Activated T-helper 1 cell treated with anti-CD3 and anti-CD28 coated beads, Interleukin-12 subunit alpha, Interleukin-12 subunit beta, Interleukin-2, Interleukin-4 antibody, amounts not matched to agents 30 ng/mL and 10 ng/mL and 1 ng/mL, durations not matched to agents 14 hours and 24 hours and 36 hours (primary cell): ENCODE measurements at regions of chr15 and their contacts with region 1.

Region 1: GRCh38 chr15:90869601-90870353 is 1.4 kb downstream of the FURIN start:
- DNase-seq: peak; percentile 61
- H3K4me3 Mint-ChIP-seq: peak overlapping the region; percentile 94
- H3K27ac Mint-ChIP-seq: peak overlapping the region; percentile 95
- H3K4me1 Mint-ChIP-seq: peaks cover 62% of the 10 kb centered on the region
- H3K27me3 Mint-ChIP-seq: no peaks in the 10 kb centered on the region

Region 2: GRCh38 chr15:90598031-90598577 is 271.7 kb before region 1 on chr15:
- intact Hi-C with region 1: no loop called
- DNase-seq: no peak
- H3K4me3 Mint-ChIP-seq: peak overlapping the region; percentile 53
- H3K27ac Mint-ChIP-seq: peak overlapping the region; percentile 99
- H3K4me1 Mint-ChIP-seq: peaks cover 86% of the 10 kb centered on the region
- H3K27me3 Mint-ChIP-seq: no peaks in the 10 kb centered on the region

Region 3: GRCh38 chr15:90648137-90649070 is 221.4 kb before region 1 on chr15:
- intact Hi-C with region 1: loop called (anchors 1 kb)
- DNase-seq: peak; percentile 75
- H3K4me3 Mint-ChIP-seq: peak overlapping the region; percentile 35
- H3K27ac Mint-ChIP-seq: peak overlapping the region; percentile 97
- H3K4me1 Mint-ChIP-seq: peaks cover 49% of the 10 kb centered on the region
- H3K27me3 Mint-ChIP-seq: no peaks in the 10 kb centered on the region

Region 4: DNA sequence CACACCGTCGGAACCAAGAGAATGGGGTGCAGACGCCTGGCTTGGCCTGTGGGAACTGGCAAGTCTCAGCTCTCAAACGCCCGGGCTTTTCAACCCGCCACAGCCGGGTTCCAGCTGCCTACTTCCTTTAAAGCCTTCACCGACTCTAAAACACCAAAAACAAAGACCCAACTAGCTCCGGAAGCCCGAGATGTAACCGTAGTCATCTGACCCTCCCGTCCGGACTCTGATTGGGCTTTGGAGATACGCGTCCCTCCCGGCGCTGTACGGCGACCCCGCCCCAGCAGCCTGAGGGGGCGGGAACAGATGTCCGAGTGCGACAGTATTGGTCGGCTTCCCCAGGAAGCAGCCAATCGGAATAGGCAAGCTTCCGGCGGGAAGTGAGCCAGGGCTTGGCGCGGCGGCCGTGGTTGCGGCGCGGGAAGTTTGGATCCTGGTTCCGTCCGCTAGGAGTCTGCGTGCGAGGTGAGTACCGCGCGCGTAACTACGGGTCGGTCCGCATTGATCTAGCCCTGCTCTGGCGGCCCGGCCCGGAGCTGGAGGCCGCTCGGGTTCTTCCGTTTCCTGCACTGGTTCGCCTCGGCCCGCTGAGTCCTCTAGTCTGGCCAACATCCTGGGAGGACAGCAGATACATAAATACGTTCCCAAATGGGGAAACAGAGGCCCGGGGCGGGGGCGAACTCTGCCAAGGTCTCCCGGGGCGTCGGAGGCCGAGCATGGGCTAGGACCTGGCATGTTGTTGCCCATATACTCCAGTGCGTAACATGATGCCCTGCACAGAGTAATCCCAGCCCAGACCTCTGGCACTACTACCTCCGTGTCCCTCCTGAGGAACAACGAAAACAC is 152.6 kb before region 1 on chr15 and contains the start of gene BLM:
- intact Hi-C with region 1: loop called (anchors 1 kb)
- DNase-seq: peak; percentile 97
- H3K4me3 Mint-ChIP-seq: peak within 1 kb of the TSS; percentile 90
- H3K27ac Mint-ChIP-seq: peak within 1 kb of the TSS; percentile 96
- H3K4me1 Mint-ChIP-seq: peaks cover 38% of the 10 kb centered on the region
- H3K27me3 Mint-ChIP-seq: no peaks in the 10 kb centered on the region
- total RNA-seq, gene BLM: 64.3 and 65.1 TPM in 2 replicates

Region 5: DNA sequence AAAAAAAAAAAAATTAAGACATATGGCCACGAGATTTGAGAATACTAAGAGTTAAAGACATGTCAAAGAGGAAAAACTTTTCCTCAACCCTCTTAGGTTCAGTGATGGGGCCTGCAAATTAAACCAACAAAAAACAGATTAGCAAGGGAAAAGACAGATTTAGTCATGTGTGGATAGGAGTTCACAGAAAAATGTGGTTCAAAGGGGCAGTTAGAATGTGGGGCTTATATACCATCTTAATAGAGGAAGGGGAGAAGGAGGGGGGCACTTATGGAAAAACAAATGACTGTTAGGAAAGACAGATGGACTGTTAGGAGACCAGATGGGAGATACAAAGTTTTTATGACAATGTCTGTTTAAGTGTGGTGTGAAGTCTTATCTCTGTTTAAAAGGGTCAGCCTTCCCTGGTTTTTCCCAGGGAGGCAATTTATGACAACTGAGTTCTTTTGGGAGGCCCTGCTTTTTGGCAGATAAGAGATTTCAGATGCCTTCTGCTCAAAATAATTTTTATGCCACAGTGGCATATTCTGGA is 70.1 kb before region 1 on chr15:
- intact Hi-C with region 1: no loop called
- DNase-seq: no peak
- H3K4me3 Mint-ChIP-seq: no peak overlapping the region
- H3K27ac Mint-ChIP-seq: peak overlapping the region; percentile 47
- H3K4me1 Mint-ChIP-seq: peaks cover 48% of the 10 kb centered on the region
- H3K27me3 Mint-ChIP-seq: no peaks in the 10 kb centered on the region

Region 6: DNA sequence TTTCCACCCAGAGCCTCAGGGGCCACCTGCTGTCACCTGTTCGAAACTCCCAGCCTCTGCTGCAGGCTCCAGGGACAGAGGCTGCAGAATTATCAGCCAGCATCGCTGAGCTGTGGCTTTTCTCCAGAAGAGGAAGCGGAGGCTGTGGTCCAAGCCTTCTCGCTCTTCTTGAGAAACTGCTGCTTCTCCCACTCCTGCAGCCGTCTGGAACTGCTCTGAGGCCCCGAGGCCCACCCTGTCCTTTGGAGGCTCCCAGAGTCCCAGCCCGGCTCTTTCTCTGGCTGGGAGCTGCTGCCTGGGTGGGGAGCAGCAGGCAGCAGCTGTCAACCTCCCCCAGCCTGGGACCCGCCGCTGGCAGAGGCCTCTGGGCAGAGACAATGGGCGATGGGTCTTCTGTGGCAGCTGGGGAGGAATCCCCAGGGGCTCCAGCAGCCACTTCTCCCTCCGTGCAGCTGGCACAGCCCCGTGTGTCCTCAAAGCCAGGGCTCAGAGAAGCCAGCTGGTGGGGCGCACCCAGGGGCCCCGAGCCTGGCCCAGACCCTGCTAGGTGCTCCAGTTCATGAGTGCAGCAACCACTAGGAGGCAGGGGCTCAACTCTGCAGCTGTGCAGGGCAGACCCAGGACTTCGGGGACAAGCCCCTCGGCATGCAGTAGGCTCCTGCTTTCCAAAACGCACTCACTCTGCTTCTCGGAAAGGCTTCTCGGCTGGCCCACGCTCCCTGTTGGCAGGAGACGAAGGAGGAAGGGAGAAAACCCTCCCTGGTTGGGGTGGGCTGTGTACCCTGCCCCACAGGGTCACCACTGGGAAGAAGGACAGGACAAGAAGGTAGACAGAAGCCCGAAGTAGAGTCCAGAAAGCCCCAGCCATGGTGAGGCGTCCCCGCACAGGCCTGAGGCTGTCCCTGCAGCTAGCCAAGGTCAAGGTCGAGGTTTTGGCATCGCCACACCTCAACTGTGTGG is 51.2 kb before region 1 on chr15:
- intact Hi-C with region 1: loop called (anchors 1 kb)
- DNase-seq: peak; percentile 40
- H3K4me3 Mint-ChIP-seq: peak overlapping the region; percentile 74
- H3K27ac Mint-ChIP-seq: peak overlapping the region; percentile 99
- H3K4me1 Mint-ChIP-seq: peaks cover 82% of the 10 kb centered on the region
- H3K27me3 Mint-ChIP-seq: no peaks in the 10 kb centered on the region

Region 7: GRCh38 chr15:90839187-90840071 is 30.3 kb before region 1 on chr15:
- intact Hi-C with region 1: loop called (anchors 1 kb)
- DNase-seq: no peak
- H3K4me3 Mint-ChIP-seq: peak overlapping the region; percentile 79
- H3K27ac Mint-ChIP-seq: peak overlapping the region; percentile 99
- H3K4me1 Mint-ChIP-seq: peaks cover 84% of the 10 kb centered on the region
- H3K27me3 Mint-ChIP-seq: no peaks in the 10 kb centered on the region

Region 8: DNA sequence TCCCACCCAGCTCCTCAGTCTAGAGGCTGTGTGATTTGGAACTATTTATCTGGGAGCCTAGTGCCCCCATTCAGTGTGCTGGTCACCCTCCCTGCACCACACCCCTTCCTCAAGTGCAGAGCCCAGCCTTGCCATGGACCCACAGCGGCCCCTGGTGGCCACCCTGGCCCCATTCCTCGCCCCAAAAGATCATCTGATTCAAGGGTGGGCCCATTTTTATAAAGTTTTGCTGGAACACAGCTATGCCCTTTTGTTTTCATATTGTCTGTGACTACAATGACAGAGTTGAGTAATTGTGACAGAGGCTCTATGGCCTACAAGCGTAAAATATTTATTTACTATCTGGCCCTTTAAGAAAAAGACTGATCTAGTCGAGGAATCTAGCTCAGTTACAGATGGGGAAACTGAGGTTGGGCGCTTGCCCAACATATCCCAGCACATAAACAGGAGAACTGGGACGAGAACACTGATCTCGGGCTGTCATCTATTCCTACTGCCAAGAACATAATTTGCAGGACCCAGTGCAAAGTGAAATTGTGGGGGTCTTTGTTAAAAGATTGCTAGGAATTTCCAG is 16.4 kb after region 1 on chr15:
- intact Hi-C with region 1: loop called (anchors 1 kb)
- DNase-seq: peak; percentile 66
- H3K4me3 Mint-ChIP-seq: peak overlapping the region; percentile 51
- H3K27ac Mint-ChIP-seq: peak overlapping the region; percentile 87
- H3K4me1 Mint-ChIP-seq: peaks cover 50% of the 10 kb centered on the region
- H3K27me3 Mint-ChIP-seq: no peaks in the 10 kb centered on the region